Aorta (tissue), 5 donors: ENCODE measurements at regions of chr7 and their contacts with region 1.

Region 1: DNA sequence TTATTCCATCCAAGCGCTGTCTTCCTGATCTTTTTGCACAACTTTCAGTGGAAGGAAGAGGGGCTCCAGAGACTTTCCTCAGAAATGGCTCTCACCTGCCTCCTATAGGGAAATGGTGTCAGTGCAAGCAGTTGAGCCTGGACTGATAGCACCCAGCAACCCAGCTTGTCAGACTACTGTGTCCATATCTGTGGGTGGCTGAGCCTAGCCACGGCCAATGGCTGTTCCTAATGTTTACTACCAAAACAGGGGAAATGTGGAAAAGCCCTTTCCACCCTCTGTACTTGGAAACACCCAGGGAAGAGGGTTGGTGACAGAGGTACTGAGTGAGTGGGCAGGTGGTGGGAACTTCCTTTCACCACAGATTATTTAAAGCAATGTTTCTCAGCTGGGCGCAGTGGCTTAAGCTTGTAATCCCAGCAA is 4.3 kb upstream of the YKT6 start:
- DNase-seq: no peak
- ATAC-seq: peak; percentile 60
- H3K4me3 ChIP-seq: no peak overlapping the region
- H3K27ac ChIP-seq: no peak overlapping the region
- H3K4me1 ChIP-seq: no peaks in the 10 kb centered on the region
- H3K27me3 ChIP-seq: no peaks in the 10 kb centered on the region

Region 2: DNA sequence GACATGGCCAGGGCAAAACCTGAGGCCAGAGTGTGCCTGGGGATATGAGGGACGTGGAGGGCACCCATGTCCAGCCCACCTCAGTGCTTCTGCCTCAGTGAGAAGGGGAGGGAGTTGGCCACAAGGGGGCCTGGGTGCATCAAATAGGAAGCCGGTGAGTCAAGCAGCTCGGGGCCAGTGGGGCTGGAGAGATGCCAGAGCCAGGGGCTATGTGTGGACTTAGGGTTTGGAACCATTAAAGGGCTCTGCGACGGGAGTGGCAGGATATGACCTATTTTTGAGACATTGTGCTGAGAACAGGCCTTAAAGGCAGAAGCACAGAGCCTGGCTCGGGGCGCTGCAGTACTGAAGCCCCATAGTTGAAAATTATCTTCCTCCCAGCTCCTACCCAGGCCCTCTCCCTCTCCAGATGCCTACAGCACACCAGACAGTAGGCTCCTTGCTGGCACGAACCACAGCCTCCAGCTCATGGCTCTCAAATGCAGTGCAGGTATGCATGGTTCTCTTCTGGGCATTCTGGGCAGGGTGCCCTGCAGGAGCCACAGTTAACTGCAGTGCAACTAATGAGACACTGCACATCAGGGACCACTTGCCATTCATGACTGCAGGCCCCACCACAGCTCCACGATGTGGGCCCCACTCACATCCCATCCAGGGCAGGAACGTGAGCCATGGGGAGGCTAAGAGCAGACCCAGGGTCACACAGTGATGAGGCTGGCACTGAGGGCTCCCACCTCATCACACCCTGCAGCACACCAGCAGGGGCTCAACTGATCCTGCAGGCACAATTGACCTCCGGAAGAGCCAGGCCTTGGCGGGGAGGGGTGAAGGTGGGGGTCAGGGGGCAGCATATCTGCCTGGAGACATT is 123.9 kb before region 1 on chr7:
- intact Hi-C with region 1: loop called (anchors 2 to 5 kb)
- DNase-seq: peak; percentile 93 to 96
- ATAC-seq: peak; percentile 77
- H3K4me3 ChIP-seq: no peak overlapping the region
- H3K27ac ChIP-seq: peak overlapping the region in 1 of 2 donors; percentile 49
- H3K4me1 ChIP-seq: no peaks in the 10 kb centered on the region
- H3K27me3 ChIP-seq: no peaks in the 10 kb centered on the region